Caco-2 (cell line): ENCODE measurements at regions of chr7 and their contacts with region 1.

Region 1: GRCh38 chr7:28168393-28169158 is 12.0 kb downstream of the JAZF1 start:
- DNase-seq: no peak
- H3K4me3 ChIP-seq: no peak overlapping the region
- H3K4me3 Mint-ChIP-seq: no peak overlapping the region
- H3K27ac Mint-ChIP-seq: no peak overlapping the region
- H3K4me1 ChIP-seq: peaks cover 8% of the 10 kb centered on the region; the same call in 1 of the 2 replicates
- H3K4me1 Mint-ChIP-seq: no peaks in the 10 kb centered on the region
- H3K27me3 ChIP-seq: no peaks in the 10 kb centered on the region
- H3K27me3 Mint-ChIP-seq: peaks cover 7% of the 10 kb centered on the region
- CTCF ChIP-seq: no peak

Region 2: GRCh38 chr7:27210441-27211083 is 958.0 kb before region 1 on chr7:
- CTCF ChIA-PET with region 1: no interaction called
- POLR2A ChIA-PET with region 1: no interaction called
- intact Hi-C with region 1: no loop called
- DNase-seq: peak; percentile 74
- H3K4me3 ChIP-seq: peak overlapping the region; percentile 30
- H3K4me3 Mint-ChIP-seq: peak overlapping the region; percentile 81
- H3K27ac Mint-ChIP-seq: peak overlapping the region; percentile 77
- H3K4me1 ChIP-seq: peaks cover 22% of the 10 kb centered on the region
- H3K4me1 Mint-ChIP-seq: peaks cover 30% of the 10 kb centered on the region
- H3K27me3 ChIP-seq: no peaks in the 10 kb centered on the region
- H3K27me3 Mint-ChIP-seq: peaks cover 2% of the 10 kb centered on the region
- CTCF ChIP-seq: peak; percentile 72 to 80

Region 3: DNA sequence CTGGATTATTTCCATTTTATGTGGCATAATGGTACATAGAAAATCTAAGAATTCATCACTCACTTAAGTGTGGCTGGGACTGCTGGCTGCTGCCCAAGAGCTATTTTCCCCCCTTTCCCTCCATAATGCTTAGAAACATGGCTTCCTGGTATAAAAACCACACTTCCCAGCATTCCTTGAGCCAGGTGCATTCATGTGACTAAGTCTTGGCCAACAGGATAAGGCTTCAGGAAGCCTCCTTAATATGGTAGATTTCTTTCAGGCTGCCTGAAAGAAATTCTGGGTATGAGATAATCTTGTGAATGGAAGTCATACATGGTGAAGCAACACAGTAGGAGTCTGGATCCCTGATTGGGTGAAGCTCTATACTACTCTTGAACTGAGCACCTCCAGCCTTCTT is 165.9 kb before region 1 on chr7:
- CTCF ChIA-PET with region 1: interaction called, 10 read pairs
- POLR2A ChIA-PET with region 1: no interaction called
- intact Hi-C with region 1: no loop called
- DNase-seq: no peak
- H3K4me3 ChIP-seq: no peak overlapping the region
- H3K4me3 Mint-ChIP-seq: no peak overlapping the region
- H3K27ac Mint-ChIP-seq: no peak overlapping the region
- H3K4me1 ChIP-seq: no peaks in the 10 kb centered on the region
- H3K4me1 Mint-ChIP-seq: no peaks in the 10 kb centered on the region
- H3K27me3 ChIP-seq: no peaks in the 10 kb centered on the region
- H3K27me3 Mint-ChIP-seq: peaks cover 4% of the 10 kb centered on the region
- CTCF ChIP-seq: no peak